Dendritic cell treated with granulocyte-macrophage colony-stimulating factor and Interleukin-4, amounts not matched to agents 40 ng/mL and 50 ng/mL, for 4 days (primary cell): ENCODE measurements at regions of chr1 and their contacts with region 1.

Region 1: DNA sequence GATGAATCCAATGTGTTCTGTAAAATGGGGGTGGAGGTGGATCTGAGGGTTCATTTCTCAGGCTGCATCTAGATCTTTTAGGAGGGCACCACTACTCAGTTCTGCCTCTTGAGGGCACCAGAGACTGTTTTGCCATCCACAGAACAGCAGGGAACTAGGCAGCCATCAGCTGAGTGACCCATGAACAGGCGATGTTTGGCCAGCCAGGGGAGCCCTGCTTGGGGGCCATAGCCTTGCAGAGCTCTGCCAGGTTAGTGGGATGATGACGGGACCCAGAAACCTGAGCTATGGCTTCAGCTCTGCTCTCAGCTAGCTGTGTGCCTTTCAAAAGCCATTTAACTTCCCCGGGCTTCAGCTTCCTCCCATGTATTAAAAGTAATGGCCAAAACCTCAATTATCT is 13.4 kb upstream of the NOS1AP start:
- H3K4me3 Mint-ChIP-seq: no peak overlapping the region
- H3K27ac Mint-ChIP-seq: no peak overlapping the region
- H3K4me1 Mint-ChIP-seq: peaks cover 4% of the 10 kb centered on the region
- H3K27me3 Mint-ChIP-seq: peaks cover 2% of the 10 kb centered on the region

Region 2: DNA sequence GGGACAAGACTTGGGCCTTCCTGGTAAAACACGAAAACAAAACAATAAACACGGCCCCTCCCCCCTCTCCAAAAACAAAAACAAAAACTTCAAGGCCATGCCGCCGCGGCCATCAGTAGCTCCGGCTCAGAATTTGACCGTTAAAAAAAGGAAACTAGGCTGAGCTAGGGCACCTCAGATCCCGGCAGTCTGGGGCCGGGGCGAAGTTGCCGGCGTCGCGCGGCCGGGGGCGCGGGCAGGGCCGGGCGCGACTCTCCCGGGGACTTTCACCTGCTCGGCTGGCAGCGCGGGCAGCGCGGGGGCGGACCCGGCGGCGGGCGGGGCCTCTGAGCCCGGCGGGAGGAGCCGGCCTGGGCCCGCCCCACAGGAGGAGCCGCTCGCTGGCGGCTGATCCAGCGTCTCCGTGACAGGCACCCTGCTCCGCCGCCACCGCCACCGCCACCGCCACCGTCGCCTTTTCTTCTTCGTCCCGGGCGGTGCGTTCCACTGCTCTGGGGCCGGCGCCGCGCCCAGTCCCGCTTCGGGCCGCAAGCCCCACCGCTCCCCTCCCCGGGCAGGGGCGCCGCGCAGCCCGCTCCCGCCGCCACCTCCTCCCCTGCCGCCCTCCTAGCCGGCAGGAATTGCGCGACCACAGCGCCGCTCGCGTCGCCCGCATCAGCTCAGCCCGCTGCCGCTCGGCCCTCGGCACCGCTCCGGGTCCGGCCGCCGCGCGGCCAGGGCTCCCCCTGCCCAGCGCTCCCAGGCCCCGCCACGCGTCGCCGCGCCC is 13.5 kb after region 1 on chr1 and contains the start of gene NOS1AP:
- intact Hi-C with region 1: no loop called
- H3K4me3 Mint-ChIP-seq: peak within 1 kb of the TSS; percentile 80
- H3K27ac Mint-ChIP-seq: no peak within 1 kb of the TSS
- H3K4me1 Mint-ChIP-seq: peaks cover 13% of the 10 kb centered on the region
- H3K27me3 Mint-ChIP-seq: peaks cover 54% of the 10 kb centered on the region

Region 3: DNA sequence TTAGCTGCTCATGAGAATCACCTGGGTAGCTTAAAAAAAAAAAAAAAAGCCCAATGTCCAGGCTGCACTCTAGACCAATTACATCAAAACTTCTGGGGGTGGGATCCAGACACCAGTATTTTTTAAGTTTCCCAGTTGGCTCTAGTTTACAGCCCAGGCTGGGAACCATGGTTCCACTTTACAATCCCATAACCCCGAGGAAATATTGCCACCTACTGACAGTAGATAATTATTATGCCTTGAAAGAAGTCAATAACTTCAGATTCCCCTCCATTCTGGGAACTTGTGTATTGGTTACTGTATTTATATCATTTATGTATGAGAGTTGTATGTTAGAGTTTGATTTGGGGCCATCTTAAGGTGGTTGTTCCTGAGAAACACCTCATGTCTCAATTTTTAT is 220.4 kb after region 1 on chr1:
- intact Hi-C with region 1: loop called (anchors 1 kb)
- H3K4me3 Mint-ChIP-seq: no peak overlapping the region
- H3K27ac Mint-ChIP-seq: no peak overlapping the region
- H3K4me1 Mint-ChIP-seq: no peaks in the 10 kb centered on the region
- H3K27me3 Mint-ChIP-seq: peaks cover 3% of the 10 kb centered on the region

Region 4: DNA sequence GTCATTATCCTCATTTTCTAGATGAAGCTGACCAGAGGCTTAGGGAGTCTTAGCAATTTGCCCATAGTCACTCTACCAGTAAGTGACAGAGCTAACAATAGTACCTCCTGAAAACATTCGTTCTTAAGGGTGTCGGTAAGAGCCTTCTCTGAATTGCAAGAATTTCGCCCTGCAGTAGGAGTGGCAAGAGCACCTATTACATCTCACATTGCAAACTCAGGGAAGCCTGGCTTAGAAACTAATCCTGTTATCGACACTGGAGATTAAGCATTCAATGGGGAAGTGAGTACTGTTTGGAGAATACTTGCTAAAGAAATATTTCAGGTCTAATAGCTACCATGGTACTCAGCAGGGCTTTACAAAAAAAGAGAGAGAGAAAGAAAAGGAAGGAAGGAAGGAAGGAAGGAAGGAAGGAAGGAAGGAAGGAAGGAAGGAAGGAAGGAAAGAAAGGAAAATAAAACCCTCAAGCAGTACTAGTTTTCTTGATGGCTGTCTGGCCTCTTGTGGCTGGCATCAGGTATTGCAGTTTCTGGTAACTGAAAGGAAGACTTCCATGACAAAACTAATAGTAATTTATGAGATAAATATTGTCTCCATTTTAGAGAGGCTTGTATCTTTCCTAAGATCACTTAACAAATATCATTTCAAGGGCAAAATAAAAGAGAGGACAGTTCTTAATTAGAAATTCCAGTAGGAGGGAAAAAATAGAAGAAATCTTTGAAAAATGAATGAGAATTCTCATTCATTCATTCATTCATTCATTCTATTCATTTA is 335.9 kb after region 1 on chr1:
- intact Hi-C with region 1: loop called (anchors 1 kb)
- H3K4me3 Mint-ChIP-seq: no peak overlapping the region
- H3K27ac Mint-ChIP-seq: no peak overlapping the region
- H3K4me1 Mint-ChIP-seq: peaks cover 23% of the 10 kb centered on the region
- H3K27me3 Mint-ChIP-seq: peaks cover 9% of the 10 kb centered on the region

Region 5: DNA sequence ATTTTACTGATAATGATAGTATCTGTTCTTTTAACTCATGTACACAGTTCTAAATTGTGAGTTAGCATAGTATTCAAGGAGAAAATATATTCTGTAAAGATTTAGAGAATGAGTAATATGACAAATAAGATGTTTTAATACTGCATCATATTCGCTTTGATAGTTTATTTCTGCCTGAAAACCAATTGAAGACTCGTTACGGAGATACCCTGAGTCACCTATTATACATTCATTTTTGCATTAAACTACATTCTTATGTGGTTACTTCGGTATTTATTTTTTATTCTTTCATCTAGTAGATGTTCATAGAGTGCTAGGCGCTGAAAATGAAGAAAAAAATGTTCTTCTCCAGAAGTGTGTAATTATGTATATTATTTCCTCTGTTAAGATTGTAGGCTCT is 446.9 kb after region 1 on chr1:
- intact Hi-C with region 1: loop called (anchors 5 kb)
- H3K4me3 Mint-ChIP-seq: no peak overlapping the region
- H3K27ac Mint-ChIP-seq: no peak overlapping the region
- H3K4me1 Mint-ChIP-seq: peaks cover 11% of the 10 kb centered on the region
- H3K27me3 Mint-ChIP-seq: no peaks in the 10 kb centered on the region

Region 6: DNA sequence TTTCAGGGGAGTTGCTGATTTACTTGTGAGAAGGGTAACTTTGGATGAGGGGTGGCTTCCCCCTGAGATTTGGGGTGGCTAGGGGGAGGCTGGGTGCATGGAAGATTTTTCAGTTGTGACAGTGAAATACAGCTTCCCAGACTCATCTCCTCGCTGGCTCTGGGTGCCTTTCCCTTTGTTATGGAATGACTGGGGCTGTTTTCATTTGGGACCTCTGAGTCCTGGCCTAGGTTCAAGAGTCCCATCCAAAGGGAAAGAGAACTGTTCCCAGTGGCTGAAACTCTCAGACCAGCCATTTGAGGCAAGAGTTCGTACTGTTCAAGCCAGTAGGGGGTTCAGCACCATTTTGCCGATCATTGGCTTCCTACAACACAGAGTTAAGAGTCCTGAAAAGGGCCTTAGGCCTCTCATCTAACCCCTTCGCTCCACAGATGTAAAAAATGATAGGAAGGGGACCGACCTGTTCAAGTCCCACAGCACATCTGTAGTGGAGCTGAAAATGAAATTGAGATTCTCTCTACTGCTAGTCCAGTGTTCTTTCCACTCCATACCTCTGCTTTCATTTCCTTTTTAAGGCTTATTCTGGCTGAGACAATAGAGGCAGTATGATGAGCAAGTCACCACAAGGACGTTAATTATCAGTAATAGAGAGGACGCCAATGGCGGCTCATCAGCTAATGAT is 577.2 kb after region 1 on chr1:
- intact Hi-C with region 1: loop called (anchors 5 kb)
- H3K4me3 Mint-ChIP-seq: no peak overlapping the region
- H3K27ac Mint-ChIP-seq: no peak overlapping the region
- H3K4me1 Mint-ChIP-seq: no peaks in the 10 kb centered on the region
- H3K27me3 Mint-ChIP-seq: peaks cover 2% of the 10 kb centered on the region